Activated T-helper 1 cell treated with anti-CD3 and anti-CD28 coated beads, Interleukin-12 subunit alpha, Interleukin-12 subunit beta, Interleukin-2, Interleukin-4 antibody, amounts not matched to agents 30 ng/mL and 10 ng/mL and 1 ng/mL, durations not matched to agents 14 hours and 24 hours and 36 hours (primary cell): ENCODE measurements at regions of chr11 and their contacts with region 1.

Region 1: GRCh38 chr11:3378426-3379423 is at the start of gene ZNF195:
- DNase-seq: peak; percentile 98
- H3K4me3 Mint-ChIP-seq: peak within 1 kb of the TSS; percentile 96
- H3K27ac Mint-ChIP-seq: peak within 1 kb of the TSS; percentile 94
- H3K4me1 Mint-ChIP-seq: peaks cover 30% of the 10 kb centered on the region
- H3K27me3 Mint-ChIP-seq: no peaks in the 10 kb centered on the region
- total RNA-seq, gene ZNF195: 41.2 and 42.8 TPM in 2 replicates

Region 2: GRCh38 chr11:3130311-3131071 is 248.2 kb before region 1 on chr11:
- intact Hi-C with region 1: no loop called
- DNase-seq: no peak
- H3K4me3 Mint-ChIP-seq: no peak overlapping the region
- H3K27ac Mint-ChIP-seq: no peak overlapping the region
- H3K4me1 Mint-ChIP-seq: no peaks in the 10 kb centered on the region
- H3K27me3 Mint-ChIP-seq: no peaks in the 10 kb centered on the region

Region 3: GRCh38 chr11:3203221-3204043 is 175.3 kb before region 1 on chr11:
- intact Hi-C with region 1: no loop called
- DNase-seq: no peak
- H3K4me3 Mint-ChIP-seq: no peak overlapping the region
- H3K27ac Mint-ChIP-seq: no peak overlapping the region
- H3K4me1 Mint-ChIP-seq: no peaks in the 10 kb centered on the region
- H3K27me3 Mint-ChIP-seq: peaks cover 5% of the 10 kb centered on the region

Region 4: DNA sequence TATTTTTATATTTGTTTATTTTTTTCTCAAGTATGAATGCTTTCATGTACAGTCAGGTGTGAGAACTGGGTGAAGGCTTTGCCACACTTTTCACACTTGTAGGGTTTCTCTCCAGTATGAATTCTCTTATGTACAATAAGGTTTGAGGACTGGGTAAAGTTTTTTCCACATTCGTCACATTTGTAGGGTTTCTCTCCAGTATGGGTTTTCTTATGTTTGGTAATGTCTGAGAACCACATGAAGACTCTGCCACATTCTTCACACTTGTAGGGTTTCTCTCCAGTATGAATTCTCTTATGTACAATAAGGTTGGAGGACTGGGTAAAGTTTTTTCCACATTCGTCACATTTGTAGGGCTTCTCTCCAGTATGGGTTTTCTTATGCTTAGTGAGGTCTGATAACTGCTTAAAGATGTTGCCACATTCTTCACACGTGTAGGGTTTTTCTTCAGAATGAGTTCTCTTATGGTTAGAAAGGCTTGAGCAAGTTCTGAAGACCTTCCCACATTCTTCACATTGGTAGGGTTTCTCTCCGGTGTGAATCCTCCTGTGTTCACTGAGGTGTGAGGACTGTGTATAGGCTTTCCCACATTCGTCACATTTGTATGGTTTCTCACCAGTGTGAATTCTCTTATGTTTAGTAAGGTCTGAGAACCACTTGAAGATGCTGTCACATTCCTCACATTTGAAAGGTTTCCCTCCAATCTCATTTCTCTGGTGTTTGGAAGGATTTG is 19.5 kb before region 1 on chr11:
- intact Hi-C with region 1: loop called (anchors 2 kb)
- DNase-seq: no peak
- H3K4me3 Mint-ChIP-seq: no peak overlapping the region
- H3K27ac Mint-ChIP-seq: no peak overlapping the region
- H3K4me1 Mint-ChIP-seq: no peaks in the 10 kb centered on the region
- H3K27me3 Mint-ChIP-seq: no peaks in the 10 kb centered on the region